Dorsolateral prefrontal cortex (tissue), 120 donors: ENCODE measurements at regions of chr11 and their contacts with region 1.

Region 1: GRCh38 chr11:115324581-115325432 is 179.4 kb downstream of the CADM1 start:
- DNase-seq: no peak
- H3K4me3 ChIP-seq: peak overlapping the region in 18 of 59 donors; percentile 7 to 44 (median 26)
- H3K27ac ChIP-seq: peak overlapping the region in 31 of 59 donors; percentile 5 to 66 (median 26)
- H3K27me3 ChIP-seq: no peaks in the 10 kb centered on the region
- CTCF ChIP-seq: peak; percentile 40 to 94 (median 82)

Region 2: GRCh38 chr11:115222218-115222862 is 102.5 kb before region 1 on chr11:
- intact Hi-C with region 1: no loop called
- DNase-seq: no peak
- H3K4me3 ChIP-seq: no peak overlapping the region
- H3K27ac ChIP-seq: peak overlapping the region in 3 of 59 donors; percentile 3 to 30 (median 21)
- H3K27me3 ChIP-seq: no peaks in the 10 kb centered on the region
- CTCF ChIP-seq: no peak

Region 3: GRCh38 chr11:115941481-115941993 is 616.7 kb after region 1 on chr11:
- intact Hi-C with region 1: loop called in 1 of 2 experiments (anchors 10 kb)
- DNase-seq: peak in 9 of 10 donors; percentile 43 to 88 (median 67)
- H3K4me3 ChIP-seq: peak overlapping the region in 20 of 59 donors; percentile 1 to 50 (median 18)
- H3K27ac ChIP-seq: peak overlapping the region in 4 of 59 donors; percentile 23 to 56 (median 42)
- H3K27me3 ChIP-seq: no peaks in the 10 kb centered on the region
- CTCF ChIP-seq: peak in 14 of 56 donors; percentile 5 to 46 (median 18)

Region 4: DNA sequence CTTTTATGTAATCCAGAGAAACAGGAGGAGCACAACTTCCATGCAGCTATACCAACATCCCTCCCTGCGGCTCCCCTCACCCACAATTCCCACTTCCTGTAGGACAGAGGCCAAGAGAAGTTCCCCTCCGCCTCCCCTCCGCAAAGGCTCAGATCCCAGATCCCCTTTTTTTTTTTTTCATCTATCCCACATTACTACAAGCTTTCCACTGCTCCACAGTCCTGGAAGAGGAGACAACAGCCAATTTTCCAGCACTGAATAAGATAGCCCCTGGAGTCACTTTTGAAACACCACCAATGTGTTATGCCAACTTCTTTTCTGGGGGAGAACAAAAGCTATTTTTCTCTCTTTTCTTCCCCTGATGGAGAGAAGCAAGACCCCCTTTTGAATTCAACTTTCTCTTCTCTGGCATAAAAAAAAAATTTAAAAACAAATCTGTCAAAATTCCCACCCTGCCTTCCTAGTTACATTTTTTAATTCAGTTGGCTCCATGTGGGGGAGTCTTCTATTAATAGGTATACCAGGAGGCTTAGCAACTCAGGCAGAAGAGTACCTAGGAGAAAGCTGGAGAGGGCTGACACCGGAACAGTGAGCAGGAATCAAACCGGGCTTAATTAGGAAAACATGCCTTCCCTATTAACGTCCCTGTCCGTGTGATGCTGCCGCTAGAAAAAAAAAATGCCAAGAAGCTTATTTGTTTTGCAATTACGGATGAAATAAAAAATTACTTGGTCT is 904.6 kb after region 1 on chr11:
- intact Hi-C with region 1: loop called in 1 of 2 experiments (anchors 5 kb)
- DNase-seq: peak in 1 of 10 donors; percentile 58
- H3K4me3 ChIP-seq: no peak overlapping the region
- H3K27ac ChIP-seq: peak overlapping the region in 1 of 59 donors; percentile 75
- H3K27me3 ChIP-seq: peaks cover 0 to 6% (median 0%) of the 10 kb centered on the region in 45 donors
- CTCF ChIP-seq: no peak

Region 5: GRCh38 chr11:116276051-116277044 is 951.5 kb after region 1 on chr11:
- intact Hi-C with region 1: loop called in 1 of 2 experiments (anchors 5 kb)
- DNase-seq: peak; percentile 53 to 80 (median 66)
- H3K4me3 ChIP-seq: peak overlapping the region in 37 of 59 donors; percentile 6 to 54 (median 31)
- H3K27ac ChIP-seq: no peak overlapping the region
- H3K27me3 ChIP-seq: no peaks in the 10 kb centered on the region
- CTCF ChIP-seq: peak; percentile 50 to 99 (median 96)